Activated CD4-positive, alpha-beta T cell treated with anti-CD3 and anti-CD28 coated beads for 36 hours (primary cell): ENCODE measurements at regions of chr4 and their contacts with region 1.

Region 1: GRCh38 chr4:48830706-48831531 is at the start of gene OCIAD1:
- DNase-seq: peak; percentile 96
- ATAC-seq: peak; percentile 99
- H3K4me3 Mint-ChIP-seq: peak within 1 kb of the TSS; percentile 100
- H3K27ac Mint-ChIP-seq: peak within 1 kb of the TSS; percentile 100
- H3K4me1 Mint-ChIP-seq: peaks cover 23% of the 10 kb centered on the region
- H3K27me3 Mint-ChIP-seq: no peaks in the 10 kb centered on the region
- total RNA-seq, gene OCIAD1: 113 to 162 TPM

Region 2: DNA sequence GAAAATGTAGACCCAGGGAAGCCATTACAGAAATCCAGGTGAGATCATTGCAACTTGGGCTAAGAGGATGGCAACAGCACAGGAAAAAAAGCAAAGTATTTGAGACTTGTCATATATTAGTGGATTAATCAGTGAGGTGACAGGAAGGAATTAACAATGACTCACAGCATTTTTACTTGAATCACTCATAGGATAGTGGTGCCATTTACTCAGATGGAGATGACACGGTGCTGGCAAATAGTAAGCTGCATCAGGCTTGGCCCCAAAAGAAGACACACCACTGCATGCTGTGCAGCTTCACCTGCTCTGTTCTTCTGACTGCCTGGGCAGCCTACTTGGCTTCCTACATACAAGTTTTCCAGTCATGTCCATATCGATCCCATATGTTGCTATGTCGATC is 195.6 kb before region 1 on chr4:
- CTCF ChIA-PET with region 1: no interaction called
- POLR2A ChIA-PET with region 1: no interaction called
- intact Hi-C with region 1: no loop called
- DNase-seq: peak; percentile 51
- ATAC-seq: peak; percentile 99
- H3K4me3 Mint-ChIP-seq: no peak overlapping the region
- H3K27ac Mint-ChIP-seq: no peak overlapping the region
- H3K4me1 Mint-ChIP-seq: peaks cover 18% of the 10 kb centered on the region
- H3K27me3 Mint-ChIP-seq: no peaks in the 10 kb centered on the region

Region 3: GRCh38 chr4:48698029-48698971 is 132.6 kb before region 1 on chr4:
- CTCF ChIA-PET with region 1: no interaction called
- POLR2A ChIA-PET with region 1: no interaction called
- intact Hi-C with region 1: loop called in 1 of 2 experiments (anchors 2 kb)
- DNase-seq: no peak
- ATAC-seq: no peak
- H3K4me3 Mint-ChIP-seq: no peak overlapping the region
- H3K27ac Mint-ChIP-seq: no peak overlapping the region
- H3K4me1 Mint-ChIP-seq: peaks cover 59% of the 10 kb centered on the region
- H3K27me3 Mint-ChIP-seq: no peaks in the 10 kb centered on the region

Region 4: GRCh38 chr4:48898733-48899431 is 68.0 kb after region 1 on chr4:
- CTCF ChIA-PET with region 1: no interaction called
- POLR2A ChIA-PET with region 1: no interaction called
- intact Hi-C with region 1: loop called in 1 of 2 experiments (anchors 2 kb)
- DNase-seq: no peak
- ATAC-seq: peak; percentile 71
- H3K4me3 Mint-ChIP-seq: no peak overlapping the region
- H3K27ac Mint-ChIP-seq: peak overlapping the region; percentile 75
- H3K4me1 Mint-ChIP-seq: peaks cover 42% of the 10 kb centered on the region
- H3K27me3 Mint-ChIP-seq: no peaks in the 10 kb centered on the region